ENCODE measurements at regions of chr13 and their contacts with region 1.

Region 1: GRCh38 chr13:32315238-32316027 is at the starts of genes BRCA2 and ZAR1L:
- DNase-seq: peak; percentile 94
- ATAC-seq: peak; percentile 95
- H3K4me3 Mint-ChIP-seq: peak within 1 kb of the TSS; percentile 92
- H3K27ac Mint-ChIP-seq: peak within 1 kb of the TSS; percentile 100
- H3K4me1 Mint-ChIP-seq: peaks cover 9% of the 10 kb centered on the region
- H3K27me3 Mint-ChIP-seq: no peaks in the 10 kb centered on the region
- total RNA-seq, gene BRCA2: 34.1 to 49.0 TPM
- total RNA-seq, gene ZAR1L: not detected

Region 2: GRCh38 chr13:31530922-31531321 is 784.5 kb before region 1 on chr13:
- CTCF ChIA-PET with region 1: no interaction called
- POLR2A ChIA-PET with region 1: no interaction called
- intact Hi-C with region 1: no loop called
- DNase-seq: no peak
- ATAC-seq: no peak
- H3K4me3 Mint-ChIP-seq: no peak overlapping the region
- H3K27ac Mint-ChIP-seq: no peak overlapping the region
- H3K4me1 Mint-ChIP-seq: no peaks in the 10 kb centered on the region
- H3K27me3 Mint-ChIP-seq: peaks cover 2% of the 10 kb centered on the region

Region 3: GRCh38 chr13:32031025-32031814 is 284.2 kb before region 1 on chr13 and contains the start of gene FRY:
- CTCF ChIA-PET with region 1: no interaction called
- POLR2A ChIA-PET with region 1: no interaction called
- intact Hi-C with region 1: loop called in 1 of 2 experiments (anchors 1 kb)
- DNase-seq: peak; percentile 74
- ATAC-seq: peak; percentile 83
- H3K4me3 Mint-ChIP-seq: peak within 1 kb of the TSS; percentile 84
- H3K27ac Mint-ChIP-seq: peak within 1 kb of the TSS; percentile 62
- H3K4me1 Mint-ChIP-seq: peaks cover 29% of the 10 kb centered on the region
- H3K27me3 Mint-ChIP-seq: no peaks in the 10 kb centered on the region
- total RNA-seq, gene FRY: 1.9 to 3.5 TPM

Region 4: DNA sequence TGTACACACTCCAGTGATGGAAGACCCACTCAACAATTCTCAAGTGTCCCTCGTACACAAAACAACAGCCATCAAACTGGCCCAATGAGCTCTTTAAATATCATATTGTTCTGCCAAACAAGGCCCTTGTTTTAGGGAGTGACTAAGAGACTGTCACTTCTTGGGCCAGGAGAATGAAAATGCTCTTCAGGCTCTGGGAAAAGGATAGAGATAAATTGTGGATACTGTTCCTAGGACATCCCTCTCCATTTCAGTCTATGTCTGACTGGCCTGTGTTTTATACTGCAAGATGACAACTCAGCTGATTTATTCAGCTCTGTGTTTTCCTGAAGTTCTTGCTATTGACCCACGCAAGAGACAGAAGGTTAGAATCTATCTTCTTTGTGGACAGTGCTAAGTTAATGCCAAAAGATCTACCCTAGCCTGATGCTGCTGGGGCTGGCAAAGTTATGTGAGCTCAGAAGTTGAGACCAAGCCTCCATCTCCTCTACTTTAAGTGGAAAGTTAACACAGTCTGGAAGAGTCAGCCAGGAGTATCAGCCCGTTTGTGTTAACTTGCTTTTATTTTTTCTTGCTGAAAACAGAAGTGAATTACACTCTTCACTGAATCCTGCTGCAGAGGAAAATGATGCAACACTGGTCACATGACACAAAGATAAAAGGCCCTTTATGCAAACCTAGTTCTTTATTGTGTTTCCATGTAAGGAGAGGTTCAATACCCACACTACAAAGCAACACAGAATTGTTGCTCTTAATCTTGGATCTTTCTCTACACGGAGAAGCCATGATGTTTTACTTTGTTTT is 269.2 kb before region 1 on chr13:
- CTCF ChIA-PET with region 1: no interaction called
- POLR2A ChIA-PET with region 1: no interaction called
- intact Hi-C with region 1: loop called in 1 of 2 experiments (anchors 10 kb)
- DNase-seq: peak; percentile 20
- ATAC-seq: peak; percentile 74
- H3K4me3 Mint-ChIP-seq: peak overlapping the region; percentile 39
- H3K27ac Mint-ChIP-seq: peak overlapping the region; percentile 84
- H3K4me1 Mint-ChIP-seq: peaks cover 58% of the 10 kb centered on the region
- H3K27me3 Mint-ChIP-seq: no peaks in the 10 kb centered on the region

Region 5: GRCh38 chr13:32175943-32176342 is 139.5 kb before region 1 on chr13:
- CTCF ChIA-PET with region 1: no interaction called
- POLR2A ChIA-PET with region 1: no interaction called
- intact Hi-C with region 1: no loop called
- DNase-seq: no peak
- ATAC-seq: no peak
- H3K4me3 Mint-ChIP-seq: no peak overlapping the region
- H3K27ac Mint-ChIP-seq: no peak overlapping the region
- H3K4me1 Mint-ChIP-seq: no peaks in the 10 kb centered on the region
- H3K27me3 Mint-ChIP-seq: no peaks in the 10 kb centered on the region

Region 6: DNA sequence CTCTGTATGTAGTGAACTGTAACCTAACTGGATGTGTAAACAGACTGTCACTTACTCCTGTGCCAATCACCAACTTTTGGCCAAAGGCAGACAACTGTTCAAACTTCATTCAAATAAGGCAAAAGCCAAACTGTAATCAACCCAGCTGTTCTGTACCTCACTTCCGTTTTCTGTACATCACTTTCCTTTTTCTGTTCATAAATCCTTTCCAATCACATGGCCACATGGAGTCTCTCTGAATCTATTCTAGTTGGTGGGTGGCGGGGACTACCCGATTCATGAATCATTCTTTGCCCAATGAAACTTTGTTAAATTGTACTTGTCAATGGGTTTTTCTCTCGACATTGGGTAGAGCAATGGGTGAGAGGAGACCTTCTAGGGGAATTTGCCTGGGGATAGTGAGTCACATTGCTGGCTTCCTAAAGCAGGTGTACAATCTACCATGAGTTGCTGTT is 1324.2 kb after region 1 on chr13:
- CTCF ChIA-PET with region 1: no interaction called
- POLR2A ChIA-PET with region 1: no interaction called
- intact Hi-C with region 1: loop called in 1 of 2 experiments (anchors 2 kb)
- DNase-seq: peak; percentile 79
- ATAC-seq: peak; percentile 89
- H3K4me3 Mint-ChIP-seq: no peak overlapping the region
- H3K27ac Mint-ChIP-seq: peak overlapping the region; percentile 88
- H3K4me1 Mint-ChIP-seq: peaks cover 50% of the 10 kb centered on the region
- H3K27me3 Mint-ChIP-seq: peaks cover under 1% of the 10 kb centered on the region